ENCODE measurements at regions of chr19 and their contacts with region 1.

Region 1: GRCh38 chr19:3679144-3679980 is 20.9 kb downstream of the PIP5K1C start:
- DNase-seq: no peak
- H3K4me3 ChIP-seq: no peak overlapping the region
- H3K27ac ChIP-seq: no peak overlapping the region
- H3K4me1 ChIP-seq: peaks cover 4% of the 10 kb centered on the region
- H3K27me3 ChIP-seq: no peaks in the 10 kb centered on the region
- CTCF ChIP-seq: no peak
- EP300 ChIP-seq: no peak
- POLR2A ChIP-seq: no peak

Region 2: DNA sequence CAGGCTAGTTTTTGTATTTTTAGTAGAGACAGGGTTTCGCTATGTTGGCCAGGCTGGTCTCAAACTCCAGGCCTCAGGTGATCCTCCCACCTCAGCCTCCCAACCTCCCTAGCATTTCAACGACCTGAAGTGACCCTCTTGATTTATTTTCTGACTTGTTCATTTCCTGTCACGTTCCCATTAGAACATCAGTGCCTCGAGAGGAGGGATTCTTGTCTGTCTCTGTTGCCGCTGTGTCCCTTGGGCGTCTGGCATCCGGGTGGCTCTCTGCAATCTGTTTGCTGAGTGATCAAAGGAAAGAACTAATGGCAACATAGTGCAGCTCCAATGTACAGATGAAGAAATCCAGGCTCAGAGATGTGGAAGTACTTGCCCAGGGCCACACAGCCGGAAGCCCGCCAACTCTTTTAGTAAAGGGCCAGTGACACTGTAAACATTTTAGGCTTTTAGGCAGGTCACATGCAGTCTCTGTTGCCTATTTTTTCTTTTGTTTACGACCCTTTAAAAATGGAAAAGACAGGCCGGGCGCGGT is 265.5 kb before region 1 on chr19:
- intact Hi-C with region 1: no loop called
- DNase-seq: no peak
- H3K4me3 ChIP-seq: no peak overlapping the region
- H3K27ac ChIP-seq: no peak overlapping the region
- H3K4me1 ChIP-seq: peaks cover 5% of the 10 kb centered on the region
- H3K27me3 ChIP-seq: no peaks in the 10 kb centered on the region
- CTCF ChIP-seq: no peak
- EP300 ChIP-seq: no peak
- POLR2A ChIP-seq: no peak

Region 3: GRCh38 chr19:3660493-3661219 is 18.7 kb before region 1 on chr19:
- intact Hi-C with region 1: loop called in 1 of 4 experiments (anchors 1 kb)
- DNase-seq: no peak
- H3K4me3 ChIP-seq: no peak overlapping the region
- H3K27ac ChIP-seq: no peak overlapping the region
- H3K4me1 ChIP-seq: peaks cover 2% of the 10 kb centered on the region
- H3K27me3 ChIP-seq: no peaks in the 10 kb centered on the region
- CTCF ChIP-seq: no peak
- EP300 ChIP-seq: no peak
- POLR2A ChIP-seq: no peak

Region 4: GRCh38 chr19:3771906-3772455 is 92.6 kb after region 1 on chr19 and contains the start of gene RAX2:
- intact Hi-C with region 1: no loop called
- DNase-seq: no peak
- H3K4me3 ChIP-seq: no peak within 1 kb of the TSS
- H3K27ac ChIP-seq: no peak within 1 kb of the TSS
- H3K4me1 ChIP-seq: peaks cover 2% of the 10 kb centered on the region
- H3K27me3 ChIP-seq: no peaks in the 10 kb centered on the region
- CTCF ChIP-seq: no peak
- EP300 ChIP-seq: no peak
- POLR2A ChIP-seq: no peak
- total RNA-seq, gene RAX2: 0.13 TPM in 1 of 7 donors, not detected in the others